HepG2 (cell line): ENCODE measurements at regions of chrX and their contacts with region 1.

Region 1: DNA sequence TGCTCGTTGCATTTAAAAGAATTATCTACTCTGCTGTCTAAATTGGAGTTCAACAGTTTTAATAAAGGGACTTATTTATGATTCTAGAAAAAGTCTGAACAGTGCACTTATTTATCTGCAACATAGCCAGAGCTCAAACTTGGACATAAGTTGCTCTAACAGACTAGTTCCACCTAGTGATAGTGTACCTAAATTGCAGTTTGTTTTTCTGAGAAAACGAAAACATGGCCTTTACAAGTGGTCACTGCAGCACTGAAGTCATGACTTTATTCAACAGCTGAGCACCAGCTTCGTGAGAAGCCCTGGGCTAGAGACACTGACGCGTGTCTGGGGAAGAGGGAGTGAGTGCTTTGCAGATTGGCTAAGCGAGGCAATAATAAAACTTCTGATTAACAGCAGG is 77.3 kb upstream of the IGSF1 start:
- DNase-seq: peak; percentile 27
- ATAC-seq: peak; percentile 79
- H3K4me3 ChIP-seq: 0 out of 6 replicates have a peak overlapping the region, but pooled peaks of 1 of the 3 experiments have one; percentile 23
- H3K27ac ChIP-seq: no peak overlapping the region
- H3K4me1 ChIP-seq: peaks cover 25% of the 10 kb centered on the region
- H3K27me3 ChIP-seq: no peaks in the 10 kb centered on the region
- CTCF ChIP-seq: peak; percentile 57
- EP300 ChIP-seq: no peak
- POLR2A ChIP-seq: no peak
- RAD21 ChIP-seq: no peak

Region 2: GRCh38 chrX:130975947-130976346 is 390.5 kb before region 1 on chrX:
- CTCF ChIA-PET with region 1: no interaction called
- POLR2A ChIA-PET with region 1: no interaction called
- in situ Hi-C with region 1: loop called (anchors 25 kb)
- intact Hi-C with region 1: no loop called
- DNase-seq: peak; percentile 24
- ATAC-seq: peak; percentile 76
- H3K4me3 ChIP-seq: no peak overlapping the region
- H3K27ac ChIP-seq: no peak overlapping the region
- H3K4me1 ChIP-seq: no peaks in the 10 kb centered on the region
- H3K27me3 ChIP-seq: no peaks in the 10 kb centered on the region
- CTCF ChIP-seq: peak; percentile 57
- EP300 ChIP-seq: no peak
- POLR2A ChIP-seq: no peak
- RAD21 ChIP-seq: peak; percentile 36; the same call in 1 of the 2 replicates

Region 3: GRCh38 chrX:131068945-131069719 is 297.3 kb before region 1 on chrX:
- CTCF ChIA-PET with region 1: interaction called, 3 read pairs
- POLR2A ChIA-PET with region 1: no interaction called
- in situ Hi-C with region 1: no loop called
- intact Hi-C with region 1: loop called (anchors 5 kb)
- DNase-seq: peak; percentile 10
- ATAC-seq: peak; percentile 92
- H3K4me3 ChIP-seq: no peak overlapping the region
- H3K27ac ChIP-seq: no peak overlapping the region
- H3K4me1 ChIP-seq: no peaks in the 10 kb centered on the region
- H3K27me3 ChIP-seq: 0 out of 5 replicates have a peak, but pooled peaks cover 0 to 4% of the 10 kb centered on the region in 2 experiments
- CTCF ChIP-seq: peak; percentile 67
- EP300 ChIP-seq: no peak
- POLR2A ChIP-seq: no peak
- RAD21 ChIP-seq: no peak

Region 4: GRCh38 chrX:131262737-131263679 is 103.4 kb before region 1 on chrX:
- CTCF ChIA-PET with region 1: interaction called, 10 read pairs
- POLR2A ChIA-PET with region 1: interaction called, 4 read pairs
- in situ Hi-C with region 1: no loop called
- intact Hi-C with region 1: loop called (anchors 1 kb)
- DNase-seq: peak; percentile 35
- ATAC-seq: peak; percentile 94
- H3K4me3 ChIP-seq: peak overlapping the region in 2 of 3 experiments; percentile 10 to 30; a peak in 2 of 6 replicates
- H3K27ac ChIP-seq: peak overlapping the region; percentile 52
- H3K4me1 ChIP-seq: peaks cover 37% of the 10 kb centered on the region
- H3K27me3 ChIP-seq: no peaks in the 10 kb centered on the region; a peak in 1 of 5 replicates
- CTCF ChIP-seq: peak; percentile 83
- EP300 ChIP-seq: no peak
- POLR2A ChIP-seq: no peak
- RAD21 ChIP-seq: peak; percentile 73

Region 5: DNA sequence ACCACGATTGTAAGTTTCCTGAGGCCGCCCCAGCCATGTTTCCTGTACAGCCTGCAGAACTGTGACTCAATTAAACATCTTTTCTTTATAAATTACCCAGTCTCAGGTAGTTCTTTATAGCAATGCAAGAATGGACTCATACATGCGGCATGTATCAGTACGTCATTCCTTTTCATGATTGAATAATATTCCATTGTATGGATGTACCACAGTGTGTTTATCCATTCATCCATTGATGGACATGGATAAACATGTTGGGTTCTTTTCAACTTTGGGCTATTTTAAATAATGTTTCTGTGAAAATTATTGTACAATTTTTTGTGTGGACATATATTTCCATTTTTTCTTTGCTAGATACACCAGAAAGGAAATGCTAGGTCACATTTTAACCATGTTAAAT is 21.9 kb after region 1 on chrX:
- CTCF ChIA-PET with region 1: no interaction called
- POLR2A ChIA-PET with region 1: no interaction called
- in situ Hi-C with region 1: no loop called
- intact Hi-C with region 1: no loop called
- DNase-seq: no peak
- ATAC-seq: no peak
- H3K4me3 ChIP-seq: no peak overlapping the region
- H3K27ac ChIP-seq: no peak overlapping the region
- H3K4me1 ChIP-seq: no peaks in the 10 kb centered on the region
- H3K27me3 ChIP-seq: no peaks in the 10 kb centered on the region
- CTCF ChIP-seq: no peak
- EP300 ChIP-seq: no peak
- POLR2A ChIP-seq: no peak
- RAD21 ChIP-seq: no peak